ENCODE measurements at regions of chr1 and their contacts with region 1.

Region 1: DNA sequence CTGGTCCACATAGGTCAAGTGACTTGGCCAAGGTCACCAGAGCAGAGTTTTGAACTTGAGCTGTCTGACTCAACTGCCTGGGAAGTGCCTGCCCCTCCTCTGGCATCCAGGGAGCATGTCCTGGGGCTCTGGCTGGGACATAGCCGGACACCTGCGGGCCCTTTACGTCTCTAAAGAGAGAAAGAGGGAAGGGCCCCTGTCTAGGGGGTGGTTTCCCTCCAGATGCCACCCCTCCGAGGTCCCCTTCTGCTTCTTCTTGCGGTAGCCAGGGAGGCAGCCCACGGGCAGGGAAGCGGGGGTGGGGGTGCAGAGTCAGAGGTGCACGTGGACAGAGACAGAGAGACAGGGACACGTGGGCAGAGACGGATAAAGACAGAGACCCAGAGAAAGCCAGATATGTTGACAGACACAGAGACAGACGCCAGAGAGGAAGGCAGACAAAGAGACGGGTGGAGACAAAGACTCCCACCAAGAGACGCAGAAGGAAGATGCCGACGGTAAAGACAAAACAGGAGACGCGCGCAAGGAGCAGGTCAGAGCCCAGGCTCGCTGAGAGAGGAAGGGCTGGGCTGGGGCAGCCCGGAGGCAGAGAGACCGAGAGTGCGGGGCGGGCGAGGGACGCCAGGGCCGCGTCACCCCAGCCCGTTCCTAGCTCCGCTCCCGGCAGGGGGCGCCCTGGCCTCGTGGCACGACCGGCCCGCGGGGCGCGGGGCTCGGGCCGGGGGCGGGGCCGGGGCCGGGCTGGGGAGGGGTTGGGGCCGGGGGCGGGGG is 458 bp upstream of the ALPL start:
- DNase-seq: peak; percentile 68 to 85 (median 77)
- ATAC-seq: peak; percentile 59 to 89 (median 84)
- H3K4me3 ChIP-seq: peak overlapping the region in 11 of 12 donors; percentile 30 to 60 (median 51)
- H3K27ac ChIP-seq: peak overlapping the region in 5 of 12 donors; percentile 9 to 62 (median 42)
- H3K4me1 ChIP-seq: peaks cover 0 to 39% (median 19%) of the 10 kb centered on the region in 12 donors
- H3K27me3 ChIP-seq: peaks cover 0 to 36% (median 7%) of the 10 kb centered on the region in 9 donors
- CTCF ChIP-seq: peak; percentile 32 to 79 (median 62)
- POLR2A ChIP-seq: no peak

Region 2: DNA sequence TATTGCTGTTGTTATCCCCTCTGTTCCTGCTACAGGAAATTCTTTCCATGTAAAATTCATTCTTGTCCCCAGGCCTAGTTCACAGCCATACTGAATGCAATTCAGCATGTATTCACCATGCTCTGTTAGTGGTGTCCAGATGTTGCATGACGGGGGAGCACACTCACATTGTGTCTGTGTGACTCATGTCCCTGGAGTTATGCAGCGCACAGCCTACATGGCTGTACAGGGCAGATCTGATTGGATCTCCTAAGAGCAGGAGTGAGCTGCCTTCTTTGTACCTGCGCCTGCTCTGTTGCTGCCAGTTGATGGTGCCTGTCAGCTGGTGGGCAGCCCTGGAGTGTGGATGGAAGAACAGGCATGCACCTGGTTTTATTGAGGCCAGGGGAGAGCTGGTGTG is 1826.5 kb before region 1 on chr1:
- intact Hi-C with region 1: no loop called
- DNase-seq: peak in 1 of 5 donors; percentile 38
- ATAC-seq: peak in 1 of 4 donors; percentile 63
- H3K4me3 ChIP-seq: no peak overlapping the region
- H3K27ac ChIP-seq: no peak overlapping the region
- H3K4me1 ChIP-seq: no peaks in the 10 kb centered on the region
- H3K27me3 ChIP-seq: no peaks in the 10 kb centered on the region
- CTCF ChIP-seq: no peak
- POLR2A ChIP-seq: no peak

Region 3: GRCh38 chr1:21378705-21379494 is 129.9 kb before region 1 on chr1:
- intact Hi-C with region 1: loop called in 1 of 10 experiments (anchors 10 kb)
- DNase-seq: no peak
- ATAC-seq: no peak
- H3K4me3 ChIP-seq: no peak overlapping the region
- H3K27ac ChIP-seq: no peak overlapping the region
- H3K4me1 ChIP-seq: no peaks in the 10 kb centered on the region
- H3K27me3 ChIP-seq: peaks cover 0 to 31% (median 0%) of the 10 kb centered on the region in 9 donors
- CTCF ChIP-seq: no peak
- POLR2A ChIP-seq: no peak

Region 4: GRCh38 chr1:21468599-21468998 is 40.2 kb before region 1 on chr1:
- intact Hi-C with region 1: no loop called
- DNase-seq: no peak
- ATAC-seq: no peak
- H3K4me3 ChIP-seq: no peak overlapping the region
- H3K27ac ChIP-seq: no peak overlapping the region
- H3K4me1 ChIP-seq: no peaks in the 10 kb centered on the region
- H3K27me3 ChIP-seq: no peaks in the 10 kb centered on the region
- CTCF ChIP-seq: peak in 8 of 12 donors; percentile 8 to 27 (median 13)
- POLR2A ChIP-seq: no peak

Region 5: DNA sequence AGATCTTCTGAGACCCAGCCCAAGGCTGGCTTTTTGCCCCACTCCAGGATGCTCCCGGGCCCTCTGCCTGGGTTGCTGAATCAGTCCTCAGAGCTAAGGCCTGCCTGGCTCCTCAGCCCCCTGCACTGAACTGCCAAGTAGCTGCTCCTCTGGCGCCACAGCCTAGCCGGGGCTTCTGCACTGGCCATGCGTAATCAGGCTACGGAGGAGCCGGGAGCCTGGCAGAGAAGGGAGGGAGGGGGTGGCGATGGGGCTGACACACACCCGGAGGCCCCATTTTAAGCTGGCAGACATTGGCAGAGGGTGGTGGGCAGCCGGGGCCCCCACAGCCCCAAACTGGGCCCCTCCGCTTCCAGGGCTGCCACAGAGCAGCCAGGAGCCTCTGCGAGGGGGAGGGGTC is 39.1 kb after region 1 on chr1:
- intact Hi-C with region 1: loop called in 1 of 10 experiments (anchors 1 kb)
- DNase-seq: peak in 1 of 5 donors; percentile 12
- ATAC-seq: no peak
- H3K4me3 ChIP-seq: no peak overlapping the region
- H3K27ac ChIP-seq: no peak overlapping the region
- H3K4me1 ChIP-seq: peaks cover 0 to 24% (median 10%) of the 10 kb centered on the region in 12 donors
- H3K27me3 ChIP-seq: peaks cover 0 to 4% (median 0%) of the 10 kb centered on the region in 9 donors
- CTCF ChIP-seq: no peak
- POLR2A ChIP-seq: no peak

Region 6: DNA sequence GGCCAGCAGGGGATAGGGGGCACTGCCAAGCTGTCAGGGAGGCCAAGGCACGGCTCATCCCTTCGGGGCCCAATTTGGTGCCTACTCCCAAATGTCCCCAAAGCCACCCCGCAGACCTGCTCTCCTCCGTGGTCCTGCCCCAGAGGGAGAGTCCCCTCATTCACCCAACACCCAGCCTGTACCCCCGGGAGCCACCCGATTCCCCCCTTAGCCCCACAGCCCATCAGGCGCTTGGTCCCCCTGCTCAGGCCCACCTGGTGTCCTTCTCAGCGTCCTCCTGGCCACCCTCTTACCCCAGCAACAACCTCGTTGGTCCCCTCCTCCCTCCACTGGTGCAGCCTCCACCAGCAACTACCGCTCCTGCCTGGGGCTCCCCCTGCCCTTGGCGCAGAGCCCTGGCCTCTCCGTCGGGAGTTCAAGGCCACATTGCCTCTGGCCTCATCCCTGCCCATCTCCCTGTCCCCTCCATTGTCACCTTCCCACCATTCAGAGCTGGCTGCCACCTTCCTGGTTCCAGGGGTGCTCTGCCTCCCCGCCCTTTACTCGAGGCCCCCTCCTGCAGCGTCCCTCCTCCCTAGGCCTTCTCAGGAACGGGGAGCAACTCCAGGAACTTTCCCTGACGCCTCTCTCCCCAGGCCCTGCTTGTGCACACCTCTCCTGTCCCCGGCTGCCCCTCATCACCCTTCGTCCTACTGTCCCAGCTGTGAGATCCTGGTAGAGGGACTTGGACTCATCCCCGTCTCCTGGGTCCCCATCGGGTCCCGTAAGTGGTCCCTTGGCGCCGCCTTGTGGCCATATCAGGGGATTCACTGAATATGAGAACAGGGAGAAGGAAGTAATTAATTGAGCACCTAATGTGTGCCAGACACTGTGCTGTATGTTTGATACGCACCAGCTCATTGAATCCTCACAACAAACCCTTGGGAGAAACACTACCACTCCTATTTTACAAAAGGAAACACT is 86.5 kb after region 1 on chr1:
- intact Hi-C with region 1: loop called in 1 of 10 experiments (anchors 1 kb)
- DNase-seq: peak; percentile 53 to 80 (median 70)
- ATAC-seq: peak in 2 of 4 donors; percentile 48 to 56
- H3K4me3 ChIP-seq: no peak overlapping the region
- H3K27ac ChIP-seq: no peak overlapping the region
- H3K4me1 ChIP-seq: peaks cover 0 to 7% (median 0%) of the 10 kb centered on the region in 12 donors
- H3K27me3 ChIP-seq: no peaks in the 10 kb centered on the region
- CTCF ChIP-seq: peak; percentile 50 to 71 (median 64)
- POLR2A ChIP-seq: no peak

Region 7: GRCh38 chr1:21659099-21659923 is 150.5 kb after region 1 on chr1:
- intact Hi-C with region 1: loop called in 9 of 10 experiments (anchors 2 to 10 kb)
- DNase-seq: peak; percentile 72 to 89 (median 75)
- ATAC-seq: peak; percentile 72 to 78 (median 76)
- H3K4me3 ChIP-seq: peak overlapping the region in 4 of 12 donors; percentile 23 to 33 (median 28)
- H3K27ac ChIP-seq: no peak overlapping the region
- H3K4me1 ChIP-seq: peaks cover 0 to 14% (median 4%) of the 10 kb centered on the region in 12 donors
- H3K27me3 ChIP-seq: peaks cover 0 to 16% (median 0%) of the 10 kb centered on the region in 9 donors
- CTCF ChIP-seq: peak; percentile 90 to 99 (median 94)
- POLR2A ChIP-seq: peak in 1 of 2 donors; percentile 11

Region 8: GRCh38 chr1:21946836-21947587 is 438.2 kb after region 1 on chr1:
- intact Hi-C with region 1: no loop called
- DNase-seq: peak in 1 of 5 donors; percentile 59
- ATAC-seq: peak; percentile 21 to 43 (median 32)
- H3K4me3 ChIP-seq: no peak overlapping the region
- H3K27ac ChIP-seq: peak overlapping the region in 6 of 12 donors; percentile 14 to 50 (median 38)
- H3K4me1 ChIP-seq: peaks cover 2 to 41% (median 27%) of the 10 kb centered on the region in 12 donors
- H3K27me3 ChIP-seq: no peaks in the 10 kb centered on the region
- CTCF ChIP-seq: peak in 5 of 12 donors; percentile 11 to 46 (median 16)
- POLR2A ChIP-seq: peak in 1 of 2 donors; percentile 15